ENCODE measurements at regions of chr10 and their contacts with region 1.

Region 1: GRCh38 chr10:89929282-89930026 is 228.1 kb downstream of the KIF20B start:
- DNase-seq: peak; percentile 44
- ATAC-seq: peak; percentile 99
- H3K4me3 ChIP-seq: no peak overlapping the region
- H3K27ac ChIP-seq: no peak overlapping the region
- H3K4me1 ChIP-seq: no peaks in the 10 kb centered on the region
- H3K27me3 ChIP-seq: no peaks in the 10 kb centered on the region
- CTCF ChIP-seq: no peak
- EP300 ChIP-seq: peak in 1 of 2 experiments; percentile 70; a peak in 1 of 4 replicates
- POLR2A ChIP-seq: no peak
- RAD21 ChIP-seq: no peak

Region 2: DNA sequence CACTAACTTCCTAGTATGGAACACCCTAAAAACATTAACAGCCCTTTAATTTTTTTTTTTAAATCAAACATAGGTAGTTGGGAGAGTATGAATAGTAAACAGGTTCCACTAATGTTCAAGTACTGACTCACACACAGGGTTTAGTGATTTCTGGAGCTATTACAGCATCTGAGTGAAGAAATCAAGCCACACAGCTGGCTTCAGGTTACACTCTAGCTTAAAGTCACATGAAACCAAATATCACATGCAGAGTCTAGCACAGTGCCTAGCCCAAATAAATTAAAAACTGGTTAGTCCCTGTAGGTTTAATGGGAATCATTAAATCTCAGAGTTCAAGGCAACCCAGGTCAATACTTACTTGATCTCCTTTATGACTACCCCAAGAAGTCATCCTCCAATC is 296.0 kb before region 1 on chr10:
- CTCF ChIA-PET with region 1: no interaction called
- POLR2A ChIA-PET with region 1: no interaction called
- RAD21 ChIA-PET with region 1: no interaction called
- SMC1A ChIA-PET with region 1: no interaction called
- in situ Hi-C with region 1: no loop called
- intact Hi-C with region 1: no loop called
- DNase-seq: no peak
- ATAC-seq: peak; percentile 52
- H3K4me3 ChIP-seq: no peak overlapping the region
- H3K27ac ChIP-seq: no peak overlapping the region
- H3K4me1 ChIP-seq: no peaks in the 10 kb centered on the region
- H3K27me3 ChIP-seq: no peaks in the 10 kb centered on the region
- CTCF ChIP-seq: no peak
- EP300 ChIP-seq: no peak
- POLR2A ChIP-seq: no peak
- RAD21 ChIP-seq: no peak

Region 3: GRCh38 chr10:89805599-89806013 is 123.8 kb before region 1 on chr10:
- CTCF ChIA-PET with region 1: no interaction called
- POLR2A ChIA-PET with region 1: no interaction called
- RAD21 ChIA-PET with region 1: no interaction called
- SMC1A ChIA-PET with region 1: interaction called, 4 read pairs
- in situ Hi-C with region 1: no loop called
- intact Hi-C with region 1: loop called (anchors 5 kb)
- DNase-seq: peak; percentile 27
- ATAC-seq: peak; percentile 97
- H3K4me3 ChIP-seq: no peak overlapping the region
- H3K27ac ChIP-seq: no peak overlapping the region
- H3K4me1 ChIP-seq: peaks cover 9% of the 10 kb centered on the region
- H3K27me3 ChIP-seq: no peaks in the 10 kb centered on the region
- CTCF ChIP-seq: no peak
- EP300 ChIP-seq: peak; percentile 18 to 72; a peak in 2 of 4 replicates
- POLR2A ChIP-seq: no peak
- RAD21 ChIP-seq: no peak

Region 4: DNA sequence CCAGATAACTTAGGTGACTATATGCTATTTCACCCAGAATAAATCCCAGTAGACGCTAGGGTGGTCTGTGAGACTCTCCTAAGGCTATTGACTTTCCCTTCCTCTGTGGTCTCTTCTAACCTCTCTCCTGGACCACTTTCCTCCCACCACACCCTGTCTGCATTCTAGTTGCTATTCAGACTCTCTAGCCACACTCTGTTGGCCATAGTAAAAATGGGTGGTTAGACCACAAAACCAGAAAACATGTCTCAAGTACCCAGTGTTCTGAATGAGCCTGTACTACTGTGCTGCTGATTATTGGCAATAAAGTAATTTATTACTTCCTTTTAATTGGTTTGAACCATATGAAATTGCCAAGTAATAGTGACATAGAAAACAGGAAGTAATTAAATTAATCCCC is 12.8 kb after region 1 on chr10:
- CTCF ChIA-PET with region 1: no interaction called
- POLR2A ChIA-PET with region 1: no interaction called
- RAD21 ChIA-PET with region 1: no interaction called
- SMC1A ChIA-PET with region 1: no interaction called
- in situ Hi-C with region 1: no loop called
- intact Hi-C with region 1: no loop called
- DNase-seq: no peak
- ATAC-seq: peak; percentile 86
- H3K4me3 ChIP-seq: no peak overlapping the region
- H3K27ac ChIP-seq: no peak overlapping the region
- H3K4me1 ChIP-seq: no peaks in the 10 kb centered on the region
- H3K27me3 ChIP-seq: peaks cover 0 to 2% of the 10 kb centered on the region in 2 experiments; a peak in 2 of 4 replicates
- CTCF ChIP-seq: no peak
- EP300 ChIP-seq: no peak
- POLR2A ChIP-seq: no peak
- RAD21 ChIP-seq: no peak

Measured in GM12878 (cell line).